ENCODE measurements at regions of chr6 and their contacts with region 1.

Region 1: DNA sequence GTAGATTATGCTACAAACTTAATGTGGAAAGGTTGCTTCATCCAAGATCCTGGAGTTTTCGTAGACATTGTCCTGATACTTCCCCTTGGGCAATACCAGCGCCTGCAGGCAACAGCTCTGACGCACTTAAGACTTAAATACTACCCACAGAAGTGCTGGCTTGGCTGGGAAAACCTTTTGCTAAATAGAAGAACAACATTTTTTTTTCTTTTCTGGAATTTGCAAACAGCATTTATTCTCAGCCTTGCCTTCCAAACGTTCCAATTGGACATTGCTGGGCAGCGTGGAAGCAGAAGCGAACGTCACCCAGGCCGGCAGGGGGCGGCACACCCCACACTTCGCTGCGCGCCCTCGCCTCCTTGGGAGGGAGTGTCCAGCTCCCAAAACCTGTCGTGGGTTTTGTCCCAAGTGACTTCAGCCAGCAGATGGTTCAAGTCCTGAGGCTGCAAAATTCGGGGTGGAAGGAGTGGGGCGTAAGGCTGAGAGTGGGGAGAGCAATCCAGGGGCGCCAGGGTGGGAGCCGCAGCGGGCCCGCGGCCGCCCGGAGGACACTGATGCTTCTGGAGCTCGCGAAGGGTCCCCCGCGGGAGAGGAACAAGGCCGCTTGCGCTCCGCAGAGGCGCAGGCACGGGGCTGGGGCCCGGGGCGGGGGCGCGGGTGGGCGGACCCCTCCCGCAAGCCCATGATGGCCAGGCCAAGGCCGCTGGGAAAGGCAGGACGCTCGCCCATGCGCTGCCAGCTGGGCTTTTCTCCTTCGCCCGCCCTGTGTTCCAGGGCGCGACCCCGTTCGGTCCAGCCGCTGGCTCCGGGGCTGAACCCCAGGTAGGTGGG is 60.8 kb upstream of the MAP3K4 start:
- DNase-seq: peak; percentile 46 to 59 (median 49)
- H3K4me3 ChIP-seq: peak overlapping the region in 1 of 2 donors; percentile 44
- H3K4me3 Mint-ChIP-seq: peak overlapping the region; percentile 40 to 75 (median 62)
- H3K27ac ChIP-seq: no peak overlapping the region
- H3K27ac Mint-ChIP-seq: no peak overlapping the region
- H3K4me1 ChIP-seq: no peaks in the 10 kb centered on the region
- H3K4me1 Mint-ChIP-seq: peaks cover 2 to 11% (median 8%) of the 10 kb centered on the region in 4 donors
- H3K27me3 ChIP-seq: no peaks in the 10 kb centered on the region
- H3K27me3 Mint-ChIP-seq: peaks cover 16 to 22% of the 10 kb centered on the region in 2 donors

Region 2: GRCh38 chr6:161111261-161111660 is 180.5 kb after region 1 on chr6:
- CTCF ChIA-PET with region 1: interaction called, 10 read pairs
- POLR2A ChIA-PET with region 1: no interaction called
- intact Hi-C with region 1: loop called (anchors 10 kb)
- DNase-seq: peak in 4 of 5 donors; percentile 33 to 51 (median 46)
- H3K4me3 ChIP-seq: no peak overlapping the region
- H3K4me3 Mint-ChIP-seq: peak overlapping the region in 7 of 8 donors; percentile 46 to 73 (median 63)
- H3K27ac ChIP-seq: peak overlapping the region; percentile 31
- H3K27ac Mint-ChIP-seq: peak overlapping the region; percentile 75 to 93 (median 82)
- H3K4me1 ChIP-seq: peaks cover 14% of the 10 kb centered on the region
- H3K4me1 Mint-ChIP-seq: peaks cover 17 to 20% (median 17%) of the 10 kb centered on the region in 4 donors
- H3K27me3 ChIP-seq: no peaks in the 10 kb centered on the region
- H3K27me3 Mint-ChIP-seq: no peaks in the 10 kb centered on the region